Heart left ventricle (tissue), 16 donors: ENCODE measurements at regions of chr9 and their contacts with region 1.

Region 1: GRCh38 chr9:131608493-131609037 is 63.2 kb downstream of the PRRT1B start:
- DNase-seq: peak; percentile 71 to 90 (median 80)
- ATAC-seq: peak; percentile 73 to 81 (median 80)
- H3K4me3 ChIP-seq: peak overlapping the region in 5 of 12 donors; percentile 1 to 41 (median 19)
- H3K27ac ChIP-seq: peak overlapping the region; percentile 73 to 95 (median 84)
- H3K4me1 ChIP-seq: peaks cover 12 to 97% (median 59%) of the 10 kb centered on the region in 12 donors
- H3K27me3 ChIP-seq: no peaks in the 10 kb centered on the region
- CTCF ChIP-seq: no peak
- POLR2A ChIP-seq: no peak

Region 2: DNA sequence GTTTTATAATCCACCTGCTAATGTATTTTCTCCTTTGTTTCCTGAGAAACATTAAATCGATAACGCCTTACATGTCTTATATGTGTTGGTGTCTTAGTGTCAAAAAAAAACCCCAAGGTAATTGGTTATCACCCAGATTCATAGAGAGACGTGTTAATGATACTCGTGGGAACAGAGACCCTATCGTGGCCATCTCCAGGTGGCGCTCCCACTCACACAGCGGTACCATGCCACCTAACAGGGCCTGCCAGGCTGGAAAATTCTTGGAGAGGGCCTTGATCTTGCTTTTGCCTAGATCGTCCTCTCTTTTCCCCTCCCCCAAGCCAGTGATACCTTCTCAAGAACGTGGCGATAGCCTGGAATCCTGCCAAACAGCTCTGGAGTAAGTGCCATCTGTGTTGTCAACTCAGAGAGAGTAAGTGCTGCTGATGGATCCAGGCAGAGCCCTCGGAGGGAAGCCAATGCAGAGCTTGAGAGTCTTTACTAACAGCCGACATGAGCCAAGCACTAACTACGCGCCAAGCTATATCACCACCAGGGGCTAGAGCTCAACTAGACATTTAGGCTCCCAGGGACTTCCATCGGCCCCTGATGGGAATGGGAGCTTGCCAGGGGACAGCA is 113.6 kb after region 1 on chr9:
- intact Hi-C with region 1: loop called in 1 of 10 experiments (anchors 5 kb)
- DNase-seq: peak in 4 of 5 donors; percentile 67 to 92 (median 80)
- ATAC-seq: peak; percentile 87 to 96 (median 92)
- H3K4me3 ChIP-seq: no peak overlapping the region
- H3K27ac ChIP-seq: peak overlapping the region in 1 of 12 donors; percentile 26
- H3K4me1 ChIP-seq: peaks cover 0 to 92% (median 46%) of the 10 kb centered on the region in 12 donors
- H3K27me3 ChIP-seq: no peaks in the 10 kb centered on the region
- CTCF ChIP-seq: peak in 4 of 12 donors; percentile 9 to 45 (median 22)
- POLR2A ChIP-seq: no peak